ENCODE measurements at regions of chr5 and their contacts with region 1.

Region 1: GRCh38 chr5:152084476-152084875 is 159.8 kb upstream of the GLRA1 start:
- DNase-seq: no peak
- CTCF ChIP-seq: no peak

Region 2: DNA sequence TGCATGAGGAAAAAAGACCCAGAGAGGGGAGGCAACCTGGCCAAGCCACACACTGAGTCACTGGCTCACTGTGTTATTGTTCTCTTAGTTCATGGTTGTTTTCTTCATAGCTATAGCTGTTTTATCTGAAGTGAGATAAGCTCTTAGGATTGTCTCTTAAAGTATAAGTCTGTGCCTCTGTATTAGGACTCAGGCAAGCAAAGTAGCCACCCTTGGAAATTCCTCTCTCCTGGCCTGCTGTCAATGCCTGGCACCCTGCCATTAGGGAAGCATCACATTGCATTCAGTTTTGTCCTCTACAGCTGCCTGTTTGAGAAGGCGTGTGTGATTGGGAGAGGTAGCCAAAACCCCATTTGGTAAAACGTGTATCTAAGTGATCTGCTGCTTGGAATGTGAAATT is 12.4 kb before region 1 on chr5:
- CTCF ChIA-PET with region 1: interaction called, 10 read pairs
- POLR2A ChIA-PET with region 1: no interaction called
- DNase-seq: no peak
- CTCF ChIP-seq: no peak